ENCODE measurements at regions of chr6 and their contacts with region 1.

Region 1: GRCh38 chr6:34154668-34155447 is 9.0 kb upstream of the GRM4 start:
- DNase-seq: peak; percentile 48 to 67
- ATAC-seq: peak; percentile 83 to 95 (median 86)
- H3K4me3 ChIP-seq: peak overlapping the region; percentile 25
- H3K27ac ChIP-seq: no peak overlapping the region
- H3K4me1 ChIP-seq: no peaks in the 10 kb centered on the region
- H3K27me3 ChIP-seq: peaks cover 0 to 36% (median 20%) of the 10 kb centered on the region in 3 donors
- CTCF ChIP-seq: peak; percentile 98

Region 2: DNA sequence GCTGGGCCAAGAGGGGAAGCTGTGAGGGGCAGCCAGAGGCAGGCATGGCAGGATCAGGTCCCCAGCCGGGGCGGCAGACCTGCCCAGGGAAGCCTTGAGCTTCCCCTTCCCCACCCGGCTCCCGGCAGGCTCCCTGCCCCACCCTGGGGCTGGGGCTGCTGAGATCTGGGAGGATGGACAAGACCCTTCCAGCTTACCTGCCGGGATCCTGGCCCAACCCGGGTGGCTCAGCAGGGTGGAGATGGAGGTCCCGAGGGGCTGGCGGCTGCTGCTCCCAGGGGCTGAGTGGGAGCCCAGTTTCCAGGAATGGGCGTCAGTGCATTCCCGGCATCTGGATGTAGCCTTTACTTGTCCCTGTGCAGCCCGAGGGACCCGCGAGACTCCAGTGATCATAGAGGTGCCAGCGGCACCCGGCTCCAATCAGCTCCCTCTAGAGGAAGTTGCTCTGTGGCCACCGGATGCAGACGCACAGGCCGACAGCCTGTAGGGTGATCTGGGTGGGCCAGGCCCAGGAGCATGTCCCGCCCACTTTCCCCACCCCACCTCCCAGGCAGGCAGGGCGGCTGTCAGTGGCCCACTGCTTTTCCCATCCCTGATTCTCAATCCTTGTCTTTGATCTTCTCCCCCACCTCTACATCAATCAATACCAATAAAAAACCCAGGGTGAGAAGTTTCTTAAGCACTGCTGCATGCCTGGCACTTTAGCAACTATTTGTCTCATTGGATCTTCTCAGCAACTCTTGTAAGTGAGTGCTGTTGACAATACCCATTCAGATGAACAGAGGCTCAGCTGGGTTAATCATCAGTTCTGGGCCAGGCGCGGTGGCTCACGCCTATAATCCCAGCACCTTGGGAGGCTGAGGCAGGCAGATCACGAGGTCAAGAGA is 574.8 kb before region 1 on chr6 and contains the start of gene BAK1:
- intact Hi-C with region 1: loop called (anchors 10 kb)
- DNase-seq: peak; percentile 89 to 94
- ATAC-seq: peak; percentile 92 to 98 (median 95)
- H3K4me3 ChIP-seq: peak within 1 kb of the TSS; percentile 89
- H3K27ac ChIP-seq: peak within 1 kb of the TSS; percentile 73
- H3K4me1 ChIP-seq: peaks cover 3% of the 10 kb centered on the region
- H3K27me3 ChIP-seq: no peaks in the 10 kb centered on the region
- CTCF ChIP-seq: peak; percentile 46
- total RNA-seq, gene BAK1: 10.3 to 22.1 (median 17.6) TPM

Region 3: GRCh38 chr6:33700391-33701050 is 454.3 kb before region 1 on chr6:
- intact Hi-C with region 1: loop called in 1 of 2 experiments (anchors 10 kb)
- DNase-seq: peak; percentile 65 to 83
- ATAC-seq: peak; percentile 79 to 83 (median 80)
- H3K4me3 ChIP-seq: peak overlapping the region; percentile 5
- H3K27ac ChIP-seq: no peak overlapping the region
- H3K4me1 ChIP-seq: peaks cover 36% of the 10 kb centered on the region
- H3K27me3 ChIP-seq: no peaks in the 10 kb centered on the region
- CTCF ChIP-seq: peak; percentile 67

Region 4: DNA sequence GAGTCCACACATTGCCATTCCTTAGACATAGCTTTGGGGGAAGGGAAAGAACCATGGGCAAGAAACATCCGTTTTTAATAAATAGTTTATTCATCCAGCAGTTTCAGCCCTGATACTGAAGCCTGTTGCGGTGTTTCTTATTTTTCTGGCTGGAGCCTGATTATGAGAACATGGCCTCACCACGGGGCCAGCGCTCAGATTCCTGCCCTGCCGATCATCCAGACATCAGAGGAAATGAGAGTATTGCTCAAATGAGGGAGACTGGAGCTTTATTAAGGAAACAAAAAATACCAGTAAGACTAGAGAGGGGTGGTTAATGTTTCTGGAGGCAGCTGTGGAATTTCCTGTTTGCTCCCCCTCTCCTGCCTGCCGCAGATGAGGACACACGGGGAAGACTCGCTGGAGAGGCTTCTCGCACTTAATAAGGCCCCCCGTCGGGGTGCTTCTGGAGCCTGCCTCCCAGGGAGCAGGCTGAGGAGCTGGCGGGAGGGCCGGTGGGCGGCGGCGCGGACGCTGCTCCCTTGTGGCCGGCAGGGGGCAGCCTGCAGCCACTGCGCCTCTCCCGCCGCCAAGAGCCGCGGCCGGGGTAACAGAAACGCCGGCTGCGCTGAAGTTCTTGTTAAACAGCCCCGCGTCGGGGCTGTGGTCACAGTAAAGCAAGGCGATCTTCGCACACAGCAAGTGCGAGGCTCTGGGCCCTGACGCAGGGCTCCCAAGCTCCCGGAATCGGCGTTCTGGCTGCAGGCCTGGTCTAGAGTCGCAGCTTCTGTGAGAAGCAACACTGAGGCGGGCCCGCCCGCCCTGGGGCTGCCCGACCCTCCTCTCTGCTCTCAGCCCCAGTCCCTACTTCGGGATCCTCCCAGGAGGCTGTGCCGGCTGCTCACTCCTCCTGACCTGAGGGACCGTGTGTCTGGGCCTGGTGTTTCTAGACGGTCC is 383.4 kb before region 1 on chr6:
- intact Hi-C with region 1: loop called (anchors 2 to 5 kb)
- DNase-seq: peak; percentile 77 to 87
- ATAC-seq: peak; percentile 80 to 86 (median 84)
- H3K4me3 ChIP-seq: peak overlapping the region; percentile 12
- H3K27ac ChIP-seq: peak overlapping the region; percentile 63
- H3K4me1 ChIP-seq: peaks cover 23% of the 10 kb centered on the region
- H3K27me3 ChIP-seq: no peaks in the 10 kb centered on the region
- CTCF ChIP-seq: peak; percentile 92

Region 5: GRCh38 chr6:34055223-34055933 is 99.5 kb before region 1 on chr6:
- intact Hi-C with region 1: loop called (anchors 1 to 2 kb)
- DNase-seq: peak; percentile 48 to 77
- ATAC-seq: peak; percentile 75 to 91 (median 82)
- H3K4me3 ChIP-seq: no peak overlapping the region
- H3K27ac ChIP-seq: no peak overlapping the region
- H3K4me1 ChIP-seq: no peaks in the 10 kb centered on the region
- H3K27me3 ChIP-seq: peaks cover 0 to 10% (median 7%) of the 10 kb centered on the region in 3 donors
- CTCF ChIP-seq: peak; percentile 78

Region 6: DNA sequence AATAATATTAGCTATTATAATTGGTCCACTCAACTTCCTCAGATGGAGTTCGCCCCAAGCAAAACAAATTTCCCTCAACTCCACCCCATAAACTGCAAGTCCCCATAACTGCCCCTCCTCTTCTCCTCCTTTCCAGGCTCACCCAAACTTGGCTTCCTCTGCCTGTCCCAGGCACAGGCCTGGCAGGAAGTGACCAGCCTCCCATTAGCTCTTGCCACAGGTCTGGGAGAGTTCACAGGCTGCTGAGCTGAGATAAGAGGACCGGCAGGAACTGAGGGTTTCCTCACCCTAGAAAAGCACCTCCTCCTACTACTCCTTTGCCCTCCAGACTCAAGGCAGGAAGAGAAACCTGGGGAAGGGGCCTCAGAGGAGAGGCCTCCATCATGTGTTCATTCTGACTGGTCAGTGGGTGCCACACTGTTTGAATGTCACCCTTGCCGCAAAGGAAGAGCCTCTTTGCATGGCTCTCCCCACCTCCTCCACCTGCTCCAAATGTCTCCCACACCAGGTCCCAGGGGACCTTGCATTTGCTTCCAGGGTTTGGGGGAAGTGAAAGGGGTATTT is 118.5 kb after region 1 on chr6:
- intact Hi-C with region 1: no loop called
- DNase-seq: peak; percentile 34 to 65
- ATAC-seq: no peak
- H3K4me3 ChIP-seq: no peak overlapping the region
- H3K27ac ChIP-seq: no peak overlapping the region
- H3K4me1 ChIP-seq: peaks cover 24% of the 10 kb centered on the region
- H3K27me3 ChIP-seq: no peaks in the 10 kb centered on the region
- CTCF ChIP-seq: no peak